ENCODE measurements at regions of chr10 and their contacts with region 1.

Region 1: DNA sequence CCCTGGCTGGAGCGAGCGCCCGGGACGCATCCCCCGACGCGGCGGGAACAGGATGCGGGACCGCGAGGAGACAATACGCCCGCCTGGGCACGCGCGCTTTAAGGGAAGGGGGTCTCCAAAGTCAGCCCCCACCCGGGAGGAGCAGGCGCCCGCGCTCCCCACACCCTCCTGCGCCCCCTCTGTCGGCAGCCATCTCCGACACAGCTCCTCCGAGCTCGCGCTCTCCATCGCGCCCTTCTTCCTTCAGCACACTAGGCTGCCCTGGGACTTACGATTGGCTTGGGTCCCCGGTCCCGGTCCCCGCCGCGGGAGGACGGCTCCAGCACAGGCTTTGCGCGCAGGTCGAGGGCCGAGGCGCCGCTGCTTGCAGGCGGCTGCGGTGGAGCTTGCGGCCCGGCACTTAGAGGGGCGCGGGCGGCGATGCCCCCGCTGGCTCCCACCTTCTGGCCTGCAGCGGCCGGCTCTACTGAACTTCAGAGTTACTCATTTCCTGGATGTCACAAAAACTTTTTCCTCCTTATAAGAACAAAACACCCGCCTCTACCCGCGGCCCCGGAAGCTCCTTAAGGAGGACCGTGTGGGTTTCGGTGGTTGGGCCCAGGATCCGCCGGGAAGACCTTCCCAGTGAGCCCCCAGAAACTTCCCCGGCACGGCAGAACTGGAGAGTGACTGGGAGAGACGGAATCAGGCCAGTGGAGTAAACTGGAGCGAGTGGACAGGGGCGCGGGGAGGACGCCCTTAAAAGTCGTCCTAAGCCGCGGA is at the start of gene ITPRIP:
- DNase-seq: peak; percentile 67
- ATAC-seq: peak; percentile 65
- H3K4me3 Mint-ChIP-seq: peak within 1 kb of the TSS; percentile 98
- H3K27ac Mint-ChIP-seq: peak within 1 kb of the TSS; percentile 100
- H3K4me1 Mint-ChIP-seq: peaks cover 55% of the 10 kb centered on the region
- H3K27me3 Mint-ChIP-seq: no peaks in the 10 kb centered on the region
- CTCF ChIP-seq: no peak
- total RNA-seq, gene ITPRIP: 21.3 and 26.1 TPM in 2 replicates

Region 2: GRCh38 chr10:104322416-104322782 is 15.8 kb before region 1 on chr10:
- CTCF ChIA-PET with region 1: interaction called, 4 read pairs
- POLR2A ChIA-PET with region 1: interaction called, 9 read pairs
- intact Hi-C with region 1: loop called (anchors 1 kb)
- DNase-seq: no peak
- ATAC-seq: peak; percentile 67
- H3K4me3 Mint-ChIP-seq: peak overlapping the region; percentile 52
- H3K27ac Mint-ChIP-seq: peak overlapping the region; percentile 82
- H3K4me1 Mint-ChIP-seq: peaks cover 98% of the 10 kb centered on the region
- H3K27me3 Mint-ChIP-seq: no peaks in the 10 kb centered on the region
- CTCF ChIP-seq: no peak

Region 3: DNA sequence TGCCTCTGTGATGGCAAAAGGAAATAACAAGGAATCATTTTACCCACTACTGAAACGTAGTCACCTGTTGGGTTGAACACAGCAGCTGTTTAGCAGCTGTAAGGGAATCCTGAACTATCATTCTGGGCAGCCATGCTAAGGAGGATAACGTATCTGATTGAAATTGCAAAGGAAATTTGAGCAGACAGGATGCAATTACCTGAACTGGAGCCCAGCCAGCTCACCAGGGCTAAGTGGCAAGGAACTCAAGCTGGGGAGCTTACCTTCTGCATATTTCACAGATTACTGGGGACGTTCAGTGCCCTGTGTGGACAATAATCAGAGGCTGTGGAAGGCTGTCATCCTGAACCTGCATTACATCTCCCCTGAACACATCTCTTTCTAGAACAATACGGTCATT is 953.4 kb after region 1 on chr10:
- CTCF ChIA-PET with region 1: no interaction called
- POLR2A ChIA-PET with region 1: no interaction called
- intact Hi-C with region 1: no loop called
- DNase-seq: no peak
- ATAC-seq: no peak
- H3K4me3 Mint-ChIP-seq: no peak overlapping the region
- H3K27ac Mint-ChIP-seq: no peak overlapping the region
- H3K4me1 Mint-ChIP-seq: no peaks in the 10 kb centered on the region
- H3K27me3 Mint-ChIP-seq: no peaks in the 10 kb centered on the region
- CTCF ChIP-seq: no peak

Measured in activated B cell treated with CpG ODN at 0.5 μM for 24 hours (primary cell).